ENCODE measurements at regions of chr1 and their contacts with region 1.

Region 1: DNA sequence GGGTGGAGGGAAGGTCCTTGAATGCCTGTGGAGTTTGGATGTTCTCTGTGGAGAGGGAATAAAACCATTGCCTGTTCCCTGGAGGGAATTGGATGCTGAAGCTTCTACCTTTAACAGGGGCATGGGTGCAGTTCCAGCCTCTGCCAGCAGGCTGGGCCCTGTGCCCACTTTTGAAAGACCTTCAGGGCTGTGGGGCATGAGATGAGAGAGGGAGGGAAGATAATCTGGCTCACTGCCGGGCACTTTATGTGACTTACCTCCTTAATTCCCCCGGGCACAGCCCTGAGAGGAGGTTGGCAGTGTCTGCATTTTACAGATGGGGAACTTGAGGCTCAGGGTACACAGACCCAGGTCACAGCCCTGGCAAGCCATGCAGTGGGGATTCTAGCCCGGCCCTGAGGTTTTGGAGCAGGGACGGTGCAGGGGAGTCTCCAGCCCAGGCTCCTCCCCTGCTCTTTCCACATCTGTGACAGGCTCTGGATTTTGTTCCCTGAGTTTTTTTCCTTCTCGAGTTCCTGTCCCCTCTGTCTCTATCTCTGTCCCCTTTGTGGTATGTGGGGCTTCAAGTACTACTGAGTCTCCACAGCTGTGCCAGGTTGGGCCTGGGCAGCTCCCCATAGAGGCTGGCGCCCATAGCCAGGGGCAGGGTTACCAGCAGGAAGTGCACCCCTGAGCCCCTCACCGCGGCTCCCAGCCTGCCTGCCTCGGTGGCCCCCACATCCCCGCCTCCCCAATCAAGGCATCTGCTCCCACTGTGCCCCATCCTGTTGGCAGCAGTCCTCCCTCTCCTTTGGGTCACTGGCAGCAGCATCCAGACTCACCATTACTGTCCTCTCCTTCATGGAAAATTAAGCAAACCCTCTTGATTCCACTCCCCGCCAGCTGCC is 14.0 kb upstream of the THEMIS2 start:
- DNase-seq: peak; percentile 81
- H3K4me3 Mint-ChIP-seq: no peak overlapping the region
- H3K27ac Mint-ChIP-seq: no peak overlapping the region
- H3K4me1 Mint-ChIP-seq: no peaks in the 10 kb centered on the region
- H3K27me3 Mint-ChIP-seq: peaks cover 13% of the 10 kb centered on the region
- CTCF ChIP-seq: peak; percentile 85

Region 2: GRCh38 chr1:27979151-27979858 is 121.0 kb after region 1 on chr1:
- CTCF ChIA-PET with region 1: interaction called, 4 read pairs
- intact Hi-C with region 1: loop called (anchors 2 kb)
- DNase-seq: no peak
- H3K4me3 Mint-ChIP-seq: no peak overlapping the region
- H3K27ac Mint-ChIP-seq: no peak overlapping the region
- H3K4me1 Mint-ChIP-seq: no peaks in the 10 kb centered on the region
- H3K27me3 Mint-ChIP-seq: no peaks in the 10 kb centered on the region
- CTCF ChIP-seq: peak; percentile 19

Region 3: DNA sequence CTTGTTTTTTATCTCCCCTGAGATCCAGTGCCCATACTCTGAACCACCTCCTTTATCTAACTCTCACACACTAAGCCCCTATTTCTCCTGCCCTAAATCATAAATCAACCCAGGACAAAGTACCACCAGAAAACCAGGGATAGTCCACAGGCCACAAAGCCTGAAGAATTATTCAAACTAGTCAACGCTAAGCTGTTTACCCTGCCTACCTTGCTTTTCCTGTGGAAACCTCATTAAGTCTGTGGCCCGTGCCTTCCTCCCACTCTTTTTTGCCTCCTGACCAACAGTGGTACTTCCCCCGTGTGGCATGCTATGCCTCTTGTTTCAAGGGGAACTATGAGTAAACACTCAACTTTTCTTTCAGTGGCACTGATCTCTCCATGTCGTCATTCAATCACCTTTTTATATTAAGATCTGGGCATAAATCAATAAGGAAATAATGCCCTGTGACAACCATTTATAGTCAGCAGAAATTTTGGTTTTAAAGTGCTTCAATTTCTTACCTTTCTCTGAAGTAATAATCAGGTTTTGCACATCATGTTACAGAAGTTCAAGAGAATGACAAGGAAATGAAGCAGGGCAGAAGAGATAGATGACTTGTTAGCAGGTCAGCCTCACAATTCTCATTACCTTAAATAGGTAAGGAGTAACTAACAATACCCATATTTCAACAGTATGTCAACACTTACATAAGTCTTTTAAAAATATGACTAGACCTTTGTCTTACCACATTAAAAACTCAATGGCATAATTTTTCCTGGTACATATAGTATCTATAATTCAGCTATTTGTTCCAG is 198.0 kb after region 1 on chr1:
- CTCF ChIA-PET with region 1: no interaction called
- intact Hi-C with region 1: no loop called
- DNase-seq: no peak
- H3K4me3 Mint-ChIP-seq: no peak overlapping the region
- H3K27ac Mint-ChIP-seq: no peak overlapping the region
- H3K4me1 Mint-ChIP-seq: no peaks in the 10 kb centered on the region
- H3K27me3 Mint-ChIP-seq: no peaks in the 10 kb centered on the region
- CTCF ChIP-seq: no peak

Measured in Calu3 (cell line).